A549 (cell line): ENCODE measurements at regions of chr7 and their contacts with region 1.

Region 1: DNA sequence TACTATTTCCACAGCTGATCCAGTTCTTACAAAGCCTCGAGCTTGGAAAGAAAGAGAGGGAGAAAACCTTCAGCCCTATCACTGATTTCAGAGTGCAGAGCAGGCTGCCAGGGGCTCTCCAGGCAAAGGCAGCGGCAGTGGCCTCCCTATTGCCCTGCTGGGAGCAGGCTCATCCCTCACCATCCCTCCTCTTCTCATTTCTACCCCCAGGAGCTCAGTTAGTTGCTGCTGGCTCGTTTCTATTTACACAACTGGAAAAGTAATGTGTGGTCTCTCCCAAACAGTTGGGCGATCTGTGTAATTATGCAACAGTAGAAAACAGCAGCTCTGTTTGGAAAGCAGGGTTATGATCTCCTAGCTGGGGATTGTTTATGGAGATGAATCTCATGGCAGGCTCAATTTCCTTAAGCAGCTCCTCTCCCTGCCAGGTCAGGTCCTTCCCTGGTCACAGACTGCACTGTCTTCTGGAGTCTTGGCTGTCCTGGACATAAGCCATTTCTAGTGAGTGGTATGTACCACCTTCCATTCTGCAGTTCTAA is 28.7 kb upstream of the TNS3 start:
- DNase-seq: peak; percentile 18 to 94
- ATAC-seq: peak; percentile 83 to 91
- H3K4me3 ChIP-seq: no peak overlapping the region
- H3K27ac ChIP-seq: peak overlapping the region; percentile 99
- H3K4me1 ChIP-seq: peaks cover 74% of the 10 kb centered on the region
- CTCF ChIP-seq: no peak
- EP300 ChIP-seq: peak; percentile 93 to 95; a peak in 4 of 5 replicates
- POLR2A ChIP-seq: no peak
- RAD21 ChIP-seq: peak; percentile 44 to 71

Region 2: DNA sequence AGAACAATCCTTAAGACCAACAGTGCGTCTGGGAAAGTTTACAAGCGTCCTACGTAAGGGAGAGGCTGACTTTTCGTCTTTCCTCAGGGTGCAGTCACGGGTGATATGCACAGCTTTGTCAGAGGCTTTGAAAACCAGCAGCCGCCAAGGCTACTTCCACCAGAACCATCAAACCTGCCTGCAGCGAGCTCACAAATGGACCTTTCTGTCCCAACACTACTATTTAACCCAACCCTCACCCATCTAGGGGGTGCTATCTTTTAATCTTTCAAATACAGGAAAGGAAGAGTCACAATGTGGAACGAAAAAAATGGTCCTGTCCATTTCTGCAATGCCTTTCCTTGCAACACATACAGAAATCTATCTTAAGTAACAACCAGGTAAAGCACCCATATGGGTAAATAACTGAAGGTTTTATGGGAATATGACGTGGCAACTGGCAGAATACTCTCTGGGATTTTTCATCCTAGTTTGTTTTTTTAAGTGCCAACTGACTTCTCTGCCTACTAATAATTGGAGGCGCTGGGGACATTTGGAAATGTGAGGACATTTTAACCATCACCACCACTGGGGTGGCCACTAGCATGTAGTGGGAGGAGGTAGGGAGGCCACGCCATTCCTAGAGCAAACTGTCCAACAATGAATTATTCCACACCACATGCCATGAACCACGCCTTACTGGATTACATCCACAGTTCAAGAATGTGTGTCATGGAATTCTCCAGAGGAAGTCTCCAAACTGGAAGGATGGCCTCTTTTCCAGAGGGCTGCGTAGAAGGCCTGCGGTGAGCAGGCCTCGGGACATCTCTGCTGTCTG is 53.2 kb before region 1 on chr7:
- CTCF ChIA-PET with region 1: no interaction called
- POLR2A ChIA-PET with region 1: no interaction called
- DNase-seq: peak; percentile 76 to 86
- ATAC-seq: peak; percentile 71 to 81
- H3K4me3 ChIP-seq: no peak overlapping the region
- H3K27ac ChIP-seq: peak overlapping the region; percentile 74 to 84
- H3K4me1 ChIP-seq: peaks cover 88% of the 10 kb centered on the region
- CTCF ChIP-seq: no peak
- EP300 ChIP-seq: 0 out of 5 replicates have a peak, but pooled peaks of 1 of the 2 experiments have one; percentile 33
- POLR2A ChIP-seq: no peak
- RAD21 ChIP-seq: no peak

Region 3: GRCh38 chr7:47571331-47572093 is 39.1 kb before region 1 on chr7:
- CTCF ChIA-PET with region 1: interaction called, 3 read pairs
- POLR2A ChIA-PET with region 1: interaction called, 12 read pairs
- DNase-seq: peak in 1 of 2 experiments; percentile 81
- ATAC-seq: peak; percentile 38 to 55
- H3K4me3 ChIP-seq: peak overlapping the region; percentile 10; the same call in 2 of the 3 replicates
- H3K27ac ChIP-seq: peak overlapping the region; percentile 99 to 100
- H3K4me1 ChIP-seq: peaks cover 99% of the 10 kb centered on the region
- CTCF ChIP-seq: no peak
- EP300 ChIP-seq: peak in 1 of 2 experiments; percentile 48; a peak in 1 of 5 replicates
- POLR2A ChIP-seq: no peak
- RAD21 ChIP-seq: 0 out of 5 replicates have a peak, but pooled peaks of 1 of the 2 experiments have one; percentile 12

Region 4: DNA sequence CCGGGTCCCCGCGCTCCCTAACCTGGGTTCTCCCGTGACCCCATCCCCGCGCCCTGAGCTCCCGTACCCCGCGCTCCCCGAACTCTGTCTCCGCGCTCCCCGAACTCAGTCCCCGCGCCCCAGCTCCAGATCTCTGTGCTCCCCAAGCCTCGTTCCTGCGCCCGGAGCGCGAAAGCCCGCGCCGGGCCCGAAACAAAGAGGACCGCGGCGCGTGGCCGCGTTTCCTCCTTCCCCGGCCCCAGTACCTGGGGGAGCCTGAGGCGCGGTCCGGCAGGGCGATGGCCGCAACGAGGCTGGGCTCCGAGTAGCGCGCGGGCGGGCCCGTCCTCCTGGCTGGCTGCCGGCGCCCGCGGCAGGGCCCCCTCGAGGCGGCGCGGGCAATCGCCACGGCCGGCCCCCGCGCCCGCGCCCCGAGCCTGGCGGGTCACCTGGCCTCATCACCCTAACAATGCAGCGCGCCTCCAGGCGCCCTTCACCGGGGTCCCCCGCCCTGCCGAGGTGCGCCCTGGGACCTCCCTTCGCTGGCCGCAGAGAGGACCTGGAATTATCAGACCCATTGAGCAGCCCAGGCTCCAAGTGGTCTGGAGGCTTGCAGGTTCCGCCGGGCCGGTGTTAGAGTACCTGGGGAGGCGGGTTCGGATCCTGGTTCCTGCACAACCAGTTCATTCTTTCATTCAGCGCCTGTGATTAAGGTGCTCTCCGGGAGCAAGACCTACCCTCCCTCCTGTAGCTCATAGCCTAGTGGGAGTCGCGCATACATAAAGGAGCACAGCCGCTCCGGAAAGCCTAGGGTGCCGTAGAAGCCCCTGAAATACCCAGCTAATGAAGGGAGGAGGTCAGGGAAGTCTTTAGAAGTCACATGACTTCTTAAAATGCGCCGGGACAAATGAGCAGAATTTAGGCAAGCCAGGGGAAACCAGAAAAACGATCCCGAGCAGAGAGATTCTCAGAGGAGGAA is 28.5 kb before region 1 on chr7 and contains the start of gene TNS3:
- CTCF ChIA-PET with region 1: interaction called, 6 read pairs
- POLR2A ChIA-PET with region 1: interaction called, 12 read pairs
- DNase-seq: peak in 1 of 2 experiments; percentile 72
- ATAC-seq: peak; percentile 37 to 67
- H3K4me3 ChIP-seq: peak within 1 kb of the TSS; percentile 83
- H3K27ac ChIP-seq: peak within 1 kb of the TSS; percentile 99 to 100
- H3K4me1 ChIP-seq: peaks cover 63% of the 10 kb centered on the region
- CTCF ChIP-seq: peak; percentile 39
- EP300 ChIP-seq: no peak
- POLR2A ChIP-seq: peak; percentile 21
- RAD21 ChIP-seq: peak; percentile 1 to 48; a peak in 4 of 5 replicates
- polyA plus RNA-seq, gene TNS3: 134 and 137 TPM in 2 replicates

Region 5: DNA sequence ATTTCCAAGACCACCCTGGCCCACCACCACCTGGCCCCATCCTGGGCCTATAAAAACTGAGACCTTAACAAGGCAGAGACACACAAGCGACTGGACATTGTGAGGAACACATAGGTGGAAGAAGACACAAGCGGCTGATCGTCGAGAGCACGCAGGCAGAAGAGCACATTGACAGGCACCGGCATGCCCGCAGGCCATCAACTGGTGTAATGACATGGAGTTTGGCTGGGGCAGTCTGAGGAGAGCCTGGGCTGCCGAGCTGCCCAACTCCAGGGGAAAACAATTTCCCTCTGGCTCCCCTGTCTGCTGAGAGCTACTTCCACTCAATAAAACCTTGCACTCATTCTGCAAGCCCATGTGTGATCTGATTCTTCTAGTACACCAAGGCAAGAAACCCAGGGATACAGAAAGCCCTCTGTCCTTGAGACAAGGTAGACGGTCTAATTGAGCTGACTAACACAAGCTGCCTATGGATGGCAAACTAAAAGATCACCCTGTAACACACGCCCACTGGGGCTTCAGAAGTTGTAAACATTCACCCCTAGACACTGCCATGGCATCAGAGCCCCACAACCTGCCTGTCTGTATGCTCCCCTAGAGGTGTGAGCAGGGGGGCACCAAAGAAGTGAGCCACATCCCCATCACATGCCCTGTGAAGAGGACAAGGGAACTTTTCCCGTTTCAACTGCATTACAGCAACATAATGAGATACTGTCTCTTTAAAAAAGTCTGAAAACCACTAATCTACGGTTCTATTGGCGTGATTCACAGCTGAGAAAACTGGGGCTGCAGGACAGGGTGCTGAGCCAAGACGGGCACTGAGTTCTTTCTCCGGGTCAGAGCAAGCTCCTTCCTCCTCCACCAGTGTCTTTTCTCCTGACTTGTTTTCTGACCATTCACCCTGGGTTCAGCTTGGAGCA is 10.1 kb before region 1 on chr7:
- CTCF ChIA-PET with region 1: interaction called, 6 read pairs
- POLR2A ChIA-PET with region 1: interaction called, 16 read pairs
- DNase-seq: peak in 1 of 2 experiments; percentile 87
- ATAC-seq: peak; percentile 70 to 71
- H3K4me3 ChIP-seq: peak overlapping the region; percentile 19; the same call in 2 of the 3 replicates
- H3K27ac ChIP-seq: peak overlapping the region; percentile 99
- H3K4me1 ChIP-seq: peaks cover 95% of the 10 kb centered on the region
- CTCF ChIP-seq: no peak
- EP300 ChIP-seq: no peak
- POLR2A ChIP-seq: 0 out of 2 replicates have a peak, but pooled peaks have one; percentile 20
- RAD21 ChIP-seq: peak; percentile 9 to 17; a peak in 3 of 5 replicates

Region 6: DNA sequence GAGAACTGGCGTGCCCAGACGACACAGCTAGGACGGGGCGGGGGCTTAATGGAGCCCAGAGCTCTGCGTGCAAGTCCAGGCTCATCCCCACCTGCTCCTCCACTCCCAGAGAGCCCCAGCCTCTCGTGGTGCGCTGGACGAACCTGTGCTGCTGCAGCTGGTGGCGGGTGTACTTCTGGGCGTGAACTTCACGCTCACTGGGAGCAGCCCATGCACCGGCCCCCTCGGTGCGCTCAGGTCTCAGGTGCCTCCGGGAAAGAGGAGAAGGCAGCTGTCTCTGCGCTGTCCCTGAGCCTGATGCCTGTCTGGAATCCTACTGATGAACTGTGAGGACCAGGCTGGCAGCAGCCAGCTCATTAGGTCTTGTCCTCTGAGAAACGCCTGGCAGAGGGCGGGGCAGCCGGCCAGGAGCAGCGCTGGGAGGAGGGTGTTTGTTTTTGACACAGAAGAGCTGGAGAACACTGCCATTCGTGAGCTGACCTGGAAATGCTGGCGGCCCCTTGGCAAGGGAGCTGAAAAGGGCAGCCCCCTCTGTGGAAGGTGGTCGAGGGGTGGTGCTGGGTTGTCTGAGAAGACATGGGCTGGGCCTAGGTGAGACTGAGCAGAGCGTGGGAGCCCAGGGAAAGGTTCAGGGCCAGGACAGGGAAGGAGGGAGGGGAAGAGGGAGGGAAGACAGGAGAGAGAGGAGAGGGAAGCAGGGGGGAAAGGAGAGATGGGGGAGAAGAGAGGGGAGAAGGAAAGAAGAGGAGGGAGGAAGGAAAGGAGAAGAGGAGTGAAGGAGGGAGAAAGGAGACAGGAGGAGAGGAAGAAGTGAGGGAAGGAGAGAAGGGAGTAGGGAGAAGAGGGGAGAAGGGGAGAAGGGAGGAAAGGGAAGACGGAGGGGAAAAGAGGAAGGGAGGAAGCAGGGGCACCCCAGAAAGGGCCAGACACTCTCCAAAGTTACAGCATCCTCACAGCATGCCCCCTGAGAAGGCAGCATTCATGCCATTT is 24.8 kb after region 1 on chr7:
- CTCF ChIA-PET with region 1: interaction called, 6 read pairs
- POLR2A ChIA-PET with region 1: interaction called, 15 read pairs
- DNase-seq: peak; percentile 73 to 83
- ATAC-seq: peak; percentile 82 to 86
- H3K4me3 ChIP-seq: peak overlapping the region; percentile 40
- H3K27ac ChIP-seq: peak overlapping the region; percentile 89 to 90
- H3K4me1 ChIP-seq: peaks cover 65% of the 10 kb centered on the region
- CTCF ChIP-seq: no peak
- EP300 ChIP-seq: no peak
- POLR2A ChIP-seq: peak; percentile 59
- RAD21 ChIP-seq: no peak; a peak in 1 of 5 replicates

Region 7: GRCh38 chr7:47698231-47698785 is 87.7 kb after region 1 on chr7:
- CTCF ChIA-PET with region 1: no interaction called
- POLR2A ChIA-PET with region 1: no interaction called
- DNase-seq: no peak
- ATAC-seq: peak in 1 of 2 experiments; percentile 46; a peak in 2 of 6 replicates
- H3K4me3 ChIP-seq: no peak overlapping the region
- H3K27ac ChIP-seq: peak overlapping the region in 1 of 2 experiments; percentile 24; a peak in 2 of 6 replicates
- H3K4me1 ChIP-seq: peaks cover 1% of the 10 kb centered on the region; the same call in 1 of the 3 replicates
- CTCF ChIP-seq: no peak
- EP300 ChIP-seq: no peak
- POLR2A ChIP-seq: no peak
- RAD21 ChIP-seq: no peak